Right lobe of liver (tissue), 6 donors: ENCODE measurements at regions of chr15 and their contacts with region 1.

Region 1: DNA sequence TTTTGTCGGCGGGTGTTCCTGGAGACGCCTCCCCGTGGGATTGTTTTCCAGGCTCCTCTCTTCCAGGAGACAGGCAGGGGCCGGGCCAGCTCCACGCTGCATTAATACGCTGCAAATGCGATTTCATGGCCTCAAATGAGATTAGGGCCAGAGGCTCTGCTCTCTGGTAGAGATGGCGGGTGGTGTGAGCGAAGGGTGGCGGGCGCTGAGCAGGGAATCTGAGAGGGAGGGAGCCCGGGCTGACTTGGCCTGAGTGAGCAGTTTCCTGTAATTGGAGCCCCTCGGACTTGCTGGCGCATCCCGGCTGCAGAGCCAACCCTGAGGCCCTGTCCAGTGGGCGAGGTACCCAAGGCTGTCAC is 7.4 kb upstream of the CCDC33 start:
- DNase-seq: no peak
- ATAC-seq: no peak
- H3K4me3 ChIP-seq: no peak overlapping the region
- H3K27ac ChIP-seq: no peak overlapping the region
- H3K4me1 ChIP-seq: no peaks in the 10 kb centered on the region
- H3K27me3 ChIP-seq: no peaks in the 10 kb centered on the region
- CTCF ChIP-seq: no peak
- POLR2A ChIP-seq: no peak

Region 2: DNA sequence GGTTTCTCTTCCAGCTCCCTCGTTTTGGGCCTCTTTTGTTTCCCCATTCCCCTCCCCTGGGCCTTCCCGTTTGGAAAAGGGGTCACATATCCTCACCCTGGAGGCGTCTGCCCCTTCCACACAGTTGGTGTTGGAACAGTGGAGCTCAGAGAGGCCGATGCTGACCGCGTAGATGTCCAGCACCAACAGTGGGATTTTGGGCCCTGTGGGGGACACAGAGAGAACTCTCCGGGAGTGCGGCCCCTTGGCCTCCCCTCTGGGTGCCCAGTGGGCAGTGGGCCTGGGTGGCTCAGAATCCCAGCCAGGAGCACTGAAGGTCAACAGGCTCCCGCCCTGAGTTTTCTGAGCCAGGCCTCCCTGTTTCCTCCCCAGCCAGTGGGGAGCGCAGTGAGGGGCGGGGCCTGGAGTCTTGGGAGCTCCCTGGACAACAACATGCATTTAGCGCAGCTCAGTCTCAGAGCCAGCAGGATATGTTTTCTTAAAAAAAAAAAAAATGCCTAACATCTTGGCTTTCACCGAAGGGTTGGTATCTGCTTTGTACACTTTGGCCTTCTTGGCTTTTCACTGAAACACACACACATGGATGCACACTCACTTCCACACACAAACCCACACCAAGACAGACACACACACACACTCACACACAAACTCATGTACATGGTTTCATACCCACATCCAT is 55.9 kb before region 1 on chr15:
- intact Hi-C with region 1: no loop called
- DNase-seq: peak in 1 of 3 donors; percentile 40
- ATAC-seq: peak; percentile 25 to 65 (median 34)
- H3K4me3 ChIP-seq: no peak overlapping the region
- H3K27ac ChIP-seq: peak overlapping the region in 1 of 3 donors; percentile 37
- H3K4me1 ChIP-seq: no peaks in the 10 kb centered on the region
- H3K27me3 ChIP-seq: no peaks in the 10 kb centered on the region
- CTCF ChIP-seq: no peak
- POLR2A ChIP-seq: no peak

Region 3: DNA sequence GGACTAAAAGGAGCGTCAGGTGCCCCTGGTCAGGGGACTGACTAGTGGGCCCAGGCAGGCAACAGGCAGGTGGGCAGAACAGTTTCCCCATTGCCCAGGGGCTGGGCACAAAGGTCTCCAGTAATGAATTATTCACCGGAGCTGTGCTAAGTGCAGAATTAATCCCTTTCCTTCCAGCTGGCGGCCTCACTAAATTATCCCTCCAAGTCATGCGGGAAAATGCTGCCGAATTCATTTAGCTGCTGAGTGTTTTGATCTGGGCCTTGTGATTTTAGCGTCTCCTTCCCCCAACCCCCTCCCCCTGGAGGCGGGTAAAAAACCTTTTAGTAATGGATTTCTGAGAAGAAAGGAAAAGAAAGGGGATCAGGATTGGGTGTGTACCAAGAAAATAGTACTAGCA is 54.7 kb after region 1 on chr15:
- intact Hi-C with region 1: loop called in 1 of 2 experiments (anchors 10 kb)
- DNase-seq: no peak
- ATAC-seq: no peak
- H3K4me3 ChIP-seq: no peak overlapping the region
- H3K27ac ChIP-seq: no peak overlapping the region
- H3K4me1 ChIP-seq: no peaks in the 10 kb centered on the region
- H3K27me3 ChIP-seq: no peaks in the 10 kb centered on the region
- CTCF ChIP-seq: no peak
- POLR2A ChIP-seq: no peak